Heart left ventricle (tissue), 16 donors: ENCODE measurements at regions of chr16 and their contacts with region 1.

Region 1: GRCh38 chr16:28069971-28070794 is 6.7 kb upstream of the GSG1L start:
- DNase-seq: peak in 1 of 5 donors; percentile 47
- ATAC-seq: peak in 3 of 4 donors; percentile 14 to 30 (median 21)
- H3K4me3 ChIP-seq: no peak overlapping the region
- H3K27ac ChIP-seq: no peak overlapping the region
- H3K4me1 ChIP-seq: peaks cover 0 to 10% (median 0%) of the 10 kb centered on the region in 12 donors
- H3K27me3 ChIP-seq: peaks cover 0 to 24% (median 0%) of the 10 kb centered on the region in 9 donors
- CTCF ChIP-seq: no peak
- POLR2A ChIP-seq: no peak

Region 2: GRCh38 chr16:27690608-27691007 is 379.6 kb before region 1 on chr16:
- intact Hi-C with region 1: loop called in 3 of 10 experiments (anchors 5 to 10 kb)
- DNase-seq: no peak
- ATAC-seq: no peak
- H3K4me3 ChIP-seq: no peak overlapping the region
- H3K27ac ChIP-seq: no peak overlapping the region
- H3K4me1 ChIP-seq: peaks cover 0 to 17% (median 0%) of the 10 kb centered on the region in 12 donors
- H3K27me3 ChIP-seq: no peaks in the 10 kb centered on the region
- CTCF ChIP-seq: peak in 11 of 12 donors; percentile 14 to 53 (median 38)
- POLR2A ChIP-seq: no peak

Region 3: GRCh38 chr16:27972500-27972899 is 97.7 kb before region 1 on chr16:
- intact Hi-C with region 1: loop called in 8 of 10 experiments (anchors 2 to 5 kb)
- DNase-seq: peak in 1 of 5 donors; percentile 37
- ATAC-seq: peak in 3 of 4 donors; percentile 51 to 69 (median 61)
- H3K4me3 ChIP-seq: no peak overlapping the region
- H3K27ac ChIP-seq: no peak overlapping the region
- H3K4me1 ChIP-seq: peaks cover 0 to 2% (median 0%) of the 10 kb centered on the region in 12 donors
- H3K27me3 ChIP-seq: no peaks in the 10 kb centered on the region
- CTCF ChIP-seq: peak in 11 of 12 donors; percentile 31 to 61 (median 50)
- POLR2A ChIP-seq: no peak

Region 4: DNA sequence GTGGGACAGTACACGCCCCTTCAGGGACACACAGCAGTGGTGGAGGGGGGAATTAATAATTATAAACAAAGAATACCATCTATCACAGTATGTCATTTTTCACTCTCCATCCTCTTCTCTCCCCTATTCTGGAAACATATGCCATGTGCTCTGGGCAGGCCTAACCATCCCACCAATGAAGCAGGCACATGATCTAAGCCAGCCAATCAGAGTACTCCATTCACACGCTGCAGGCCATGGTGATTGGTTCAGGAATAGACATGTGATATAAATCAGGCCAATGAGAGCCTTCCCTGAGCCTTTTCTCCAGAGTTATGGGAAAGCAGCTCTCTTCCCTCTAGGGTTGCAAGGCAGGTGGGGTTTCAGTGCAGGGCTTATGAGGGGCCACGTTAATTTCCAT is 43.1 kb before region 1 on chr16:
- intact Hi-C with region 1: no loop called
- DNase-seq: no peak
- ATAC-seq: no peak
- H3K4me3 ChIP-seq: no peak overlapping the region
- H3K27ac ChIP-seq: no peak overlapping the region
- H3K4me1 ChIP-seq: no peaks in the 10 kb centered on the region
- H3K27me3 ChIP-seq: no peaks in the 10 kb centered on the region
- CTCF ChIP-seq: no peak
- POLR2A ChIP-seq: no peak

Region 5: GRCh38 chr16:28136751-28137434 is 66.7 kb after region 1 on chr16:
- intact Hi-C with region 1: loop called in 1 of 10 experiments (anchors 10 kb)
- DNase-seq: no peak
- ATAC-seq: no peak
- H3K4me3 ChIP-seq: no peak overlapping the region
- H3K27ac ChIP-seq: peak overlapping the region in 1 of 12 donors; percentile 23
- H3K4me1 ChIP-seq: peaks cover 0 to 32% (median 0%) of the 10 kb centered on the region in 12 donors
- H3K27me3 ChIP-seq: no peaks in the 10 kb centered on the region
- CTCF ChIP-seq: peak in 2 of 12 donors; percentile 8 to 13
- POLR2A ChIP-seq: no peak